Heart left ventricle (tissue), 16 donors: ENCODE measurements at regions of chr16 and their contacts with region 1.

Region 1: DNA sequence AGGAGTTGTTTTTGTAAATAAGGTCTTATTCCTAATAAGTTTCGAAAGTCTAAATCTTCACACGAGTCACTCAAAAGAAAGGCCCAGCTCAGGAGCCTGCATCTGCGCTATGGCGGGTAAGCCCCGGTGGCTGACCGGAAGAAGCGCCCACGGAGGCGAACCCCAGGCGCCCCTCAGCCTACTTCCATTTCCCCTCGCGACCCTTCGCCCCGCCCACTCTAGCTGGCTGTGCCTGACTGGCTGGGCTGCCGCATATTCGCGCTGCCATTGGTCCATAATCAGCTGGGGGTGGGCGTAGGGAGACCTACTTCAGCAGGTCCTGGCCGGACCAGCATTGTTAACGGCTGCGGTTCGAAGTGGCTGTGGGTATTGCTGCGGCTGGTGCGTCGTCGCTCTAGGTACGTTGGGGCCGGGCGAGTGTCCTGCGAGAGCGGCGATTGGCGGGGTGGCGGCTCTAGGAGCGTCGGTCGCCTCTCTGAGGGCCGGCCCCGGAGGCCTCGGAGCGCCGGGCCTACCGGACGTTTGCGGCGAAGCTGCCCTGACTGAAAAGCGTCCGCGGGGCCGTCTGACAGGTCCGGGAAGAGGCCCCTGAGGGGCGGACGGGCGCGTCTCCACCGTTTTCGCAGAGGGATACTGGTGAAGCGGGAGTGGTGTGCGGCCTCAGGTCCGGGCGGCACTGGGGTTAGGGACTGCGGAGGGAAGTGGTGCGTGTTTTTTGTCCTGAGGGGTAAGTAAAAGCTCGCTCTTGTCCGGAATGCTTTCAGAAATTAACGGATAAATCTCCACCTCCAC is at the start of gene ATF7IP2:
- DNase-seq: peak; percentile 92 to 96 (median 95)
- ATAC-seq: peak; percentile 98 to 100 (median 99)
- H3K4me3 ChIP-seq: peak within 1 kb of the TSS; percentile 40 to 88 (median 78)
- H3K27ac ChIP-seq: peak within 1 kb of the TSS; percentile 63 to 91 (median 88)
- H3K4me1 ChIP-seq: peaks cover 0 to 21% (median 9%) of the 10 kb centered on the region in 12 donors
- H3K27me3 ChIP-seq: no peaks in the 10 kb centered on the region
- CTCF ChIP-seq: no peak
- POLR2A ChIP-seq: peak; percentile 61 to 91
- total RNA-seq, gene ATF7IP2: 34.4 to 51.8 (median 43.2) TPM

Region 2: DNA sequence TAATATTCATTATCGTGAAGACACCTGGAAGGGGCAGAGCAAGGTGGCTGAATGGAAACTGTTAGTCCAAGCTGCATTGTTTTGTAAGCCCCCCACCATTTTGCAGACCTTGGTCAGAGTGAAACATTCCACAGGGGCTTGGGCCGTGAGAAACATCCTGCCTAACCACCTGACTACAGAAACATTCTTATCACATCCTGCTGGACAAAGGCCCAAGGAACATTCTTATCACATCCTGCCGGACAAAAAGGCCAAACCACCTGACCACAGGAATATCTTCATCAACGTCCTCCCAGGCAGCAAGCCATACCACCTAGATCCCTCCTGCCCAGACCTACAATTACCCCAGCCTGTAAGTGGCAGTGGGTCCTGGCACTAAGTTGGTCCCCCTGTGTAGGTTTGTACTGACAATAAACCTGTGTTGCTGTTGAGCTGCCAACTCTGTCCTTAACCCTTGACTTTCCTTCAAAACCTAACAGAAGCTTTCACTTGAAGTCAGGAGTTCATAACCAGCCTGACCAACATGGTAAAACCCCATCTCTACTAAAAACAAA is 19.5 kb after region 1 on chr16:
- intact Hi-C with region 1: loop called in 1 of 10 experiments (anchors 2 kb)
- DNase-seq: peak in 4 of 5 donors; percentile 29 to 54 (median 33)
- ATAC-seq: peak; percentile 73 to 92 (median 81)
- H3K4me3 ChIP-seq: no peak overlapping the region
- H3K27ac ChIP-seq: peak overlapping the region in 10 of 12 donors; percentile 17 to 76 (median 56)
- H3K4me1 ChIP-seq: peaks cover 0 to 20% (median 4%) of the 10 kb centered on the region in 12 donors
- H3K27me3 ChIP-seq: no peaks in the 10 kb centered on the region
- CTCF ChIP-seq: no peak
- POLR2A ChIP-seq: no peak